Prostate gland (tissue), 2 donors: ENCODE measurements at regions of chr6 and their contacts with region 1.

Region 1: GRCh38 chr6:53651764-53652401 is 13.7 kb downstream of the KLHL31 start:
- DNase-seq: peak; percentile 83
- H3K4me3 ChIP-seq: peak overlapping the region; percentile 51 to 55
- H3K27ac ChIP-seq: peak overlapping the region; percentile 72 to 81
- H3K4me1 ChIP-seq: no peaks in the 10 kb centered on the region
- H3K27me3 ChIP-seq: no peaks in the 10 kb centered on the region
- CTCF ChIP-seq: peak in 3 of 4 experiments; percentile 35 to 80 (median 69)
- POLR2A ChIP-seq: peak; percentile 39

Region 2: DNA sequence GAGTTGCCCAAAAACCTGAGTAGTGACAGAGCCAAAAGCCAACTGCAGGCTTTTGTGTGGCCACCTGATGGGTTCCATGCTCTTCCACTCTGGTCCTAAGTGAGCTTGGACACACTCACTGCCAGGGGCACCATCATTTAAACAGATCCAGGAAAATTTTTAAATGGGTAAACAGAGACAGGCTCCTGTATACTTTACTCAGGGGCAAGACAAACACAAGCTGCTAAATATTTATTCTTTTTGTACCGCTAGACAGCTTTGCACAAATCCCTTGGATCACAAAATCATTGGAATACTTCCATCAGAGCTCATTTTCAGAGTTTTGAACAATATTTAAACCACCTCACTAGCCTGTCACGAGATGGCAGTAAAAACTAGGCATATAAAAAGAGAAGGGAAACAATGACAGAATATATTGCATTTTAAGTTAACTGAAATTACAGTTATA is 138.3 kb before region 1 on chr6:
- intact Hi-C with region 1: loop called (anchors 5 kb)
- DNase-seq: peak; percentile 20
- H3K4me3 ChIP-seq: no peak overlapping the region
- H3K27ac ChIP-seq: peak overlapping the region in 1 of 2 donors; percentile 1
- H3K4me1 ChIP-seq: peaks cover 7% of the 10 kb centered on the region
- H3K27me3 ChIP-seq: no peaks in the 10 kb centered on the region
- CTCF ChIP-seq: peak in 3 of 4 experiments; percentile 24 to 52 (median 28)
- POLR2A ChIP-seq: no peak

Region 3: DNA sequence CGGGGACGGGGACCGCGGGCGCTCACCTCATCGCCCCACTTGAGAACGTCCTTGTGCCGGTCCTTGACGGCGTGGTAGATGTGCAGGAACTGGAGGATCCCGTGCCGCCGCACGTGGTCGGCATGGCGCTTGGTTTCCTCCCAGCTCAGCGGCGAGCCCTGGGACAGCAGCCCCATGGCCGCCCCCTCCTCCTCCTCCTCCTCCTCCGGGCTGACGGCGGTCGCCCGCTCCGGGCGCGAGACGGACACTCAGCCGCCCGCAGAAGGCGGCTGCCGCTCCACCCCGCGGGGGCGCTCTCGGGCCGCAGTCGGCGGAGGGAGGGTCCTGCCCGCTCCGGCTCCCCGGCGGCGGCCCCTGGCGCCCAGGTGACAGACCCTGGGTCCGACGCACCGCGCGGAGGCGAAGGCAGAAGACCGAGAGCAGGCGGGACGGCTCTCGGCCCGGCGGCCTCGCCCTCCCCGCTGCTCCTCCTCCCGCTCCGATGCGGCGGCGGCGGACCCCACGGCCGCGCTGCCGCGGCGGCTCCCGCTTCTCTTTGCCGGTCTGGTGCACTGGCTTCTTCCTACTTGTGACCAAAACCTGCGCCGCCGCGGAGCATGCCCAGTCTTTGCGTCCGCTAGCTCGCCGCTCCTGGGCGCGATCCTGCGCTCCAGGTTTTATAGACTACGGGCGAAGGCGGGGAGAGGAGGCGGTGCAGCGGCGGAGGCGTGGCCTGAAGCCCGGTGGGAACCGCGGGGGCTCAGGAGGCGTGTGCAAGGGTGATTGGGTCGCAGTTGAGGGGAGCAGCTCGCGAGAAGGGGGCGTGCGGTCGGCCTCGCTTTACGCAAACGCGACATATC is 107.2 kb before region 1 on chr6 and contains the start of gene GCLC:
- intact Hi-C with region 1: loop called (anchors 1 kb)
- DNase-seq: peak; percentile 93
- H3K4me3 ChIP-seq: peak within 1 kb of the TSS; percentile 79 to 95
- H3K27ac ChIP-seq: peak within 1 kb of the TSS; percentile 92 to 97
- H3K4me1 ChIP-seq: peaks cover 4% of the 10 kb centered on the region
- H3K27me3 ChIP-seq: no peaks in the 10 kb centered on the region
- CTCF ChIP-seq: peak; percentile 68 to 89 (median 84)
- POLR2A ChIP-seq: peak; percentile 86
- total RNA-seq, gene GCLC: 77.1 to 81.2 TPM

Region 4: DNA sequence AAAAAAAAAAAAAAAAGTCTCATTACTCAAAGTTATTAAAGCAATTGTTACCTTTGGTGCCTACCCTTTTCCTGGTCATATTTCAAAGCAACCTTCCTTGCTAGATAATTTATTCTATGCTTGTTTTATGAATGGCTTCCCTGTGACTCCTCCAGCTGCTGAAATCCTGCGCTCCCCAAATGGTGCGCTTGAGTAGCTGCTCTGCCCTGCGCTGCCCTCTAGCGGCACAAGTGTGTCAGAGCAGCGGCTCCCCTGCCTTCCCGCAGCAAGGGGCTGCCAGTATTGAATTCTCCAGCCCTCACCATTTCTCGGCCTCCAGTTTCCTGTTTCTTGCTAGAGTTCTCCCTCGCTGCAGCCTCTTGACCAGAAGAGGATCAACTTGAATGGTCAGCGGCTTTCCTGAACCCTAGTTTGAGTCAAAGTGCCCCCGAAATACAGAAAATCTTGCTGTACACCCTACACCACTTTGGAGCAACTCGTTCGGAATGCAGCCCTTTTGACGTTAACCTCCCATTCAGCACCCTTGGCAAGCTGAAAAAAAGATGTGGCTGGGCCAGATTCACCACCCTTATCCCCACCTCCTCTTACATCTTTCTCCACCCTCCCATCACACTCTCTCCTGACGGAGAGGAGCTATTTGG is 74.0 kb after region 1 on chr6:
- intact Hi-C with region 1: loop called (anchors 10 kb)
- DNase-seq: peak; percentile 71
- H3K4me3 ChIP-seq: no peak overlapping the region
- H3K27ac ChIP-seq: no peak overlapping the region
- H3K4me1 ChIP-seq: no peaks in the 10 kb centered on the region
- H3K27me3 ChIP-seq: no peaks in the 10 kb centered on the region
- CTCF ChIP-seq: peak; percentile 86 to 90 (median 89)
- POLR2A ChIP-seq: no peak

Region 5: DNA sequence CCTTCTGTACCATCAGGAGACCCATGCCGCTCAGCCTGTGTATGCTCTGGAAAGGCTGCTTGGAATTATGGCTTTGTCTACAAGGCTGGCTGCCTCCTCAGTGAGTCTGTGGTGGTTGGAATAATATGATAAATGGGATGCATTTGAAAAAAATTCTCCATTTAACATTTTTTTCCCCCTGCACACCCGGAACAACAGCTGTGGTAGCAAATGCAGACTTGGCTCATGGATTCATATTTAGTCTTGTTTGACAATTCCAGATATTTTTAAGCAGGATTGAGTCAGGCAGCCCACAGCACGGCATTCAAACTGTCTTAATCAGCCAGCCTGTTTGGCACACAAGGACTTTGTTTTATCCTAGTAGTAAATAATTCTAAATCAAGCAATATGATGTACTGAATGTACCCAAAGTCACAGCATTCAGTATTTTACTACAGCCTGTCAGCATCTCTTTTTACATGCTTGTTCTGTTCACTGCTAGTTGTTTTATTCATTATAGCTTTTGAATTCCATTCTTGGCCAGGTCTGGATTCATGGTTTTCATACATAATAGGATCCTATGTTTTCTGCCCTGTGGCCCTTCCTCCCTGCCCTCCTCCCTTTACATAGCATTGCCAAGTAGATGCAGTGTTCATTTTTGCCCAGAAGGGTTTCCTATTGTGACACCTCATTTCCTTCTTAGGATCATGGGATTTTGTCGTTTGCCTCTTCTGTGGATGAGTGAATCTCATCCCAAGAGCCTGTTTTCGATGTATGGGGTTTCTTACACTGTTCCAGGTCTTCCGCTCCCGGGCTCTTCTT is 211.0 kb after region 1 on chr6:
- intact Hi-C with region 1: no loop called
- DNase-seq: no peak
- H3K4me3 ChIP-seq: no peak overlapping the region
- H3K27ac ChIP-seq: no peak overlapping the region
- H3K4me1 ChIP-seq: no peaks in the 10 kb centered on the region
- H3K27me3 ChIP-seq: no peaks in the 10 kb centered on the region
- CTCF ChIP-seq: no peak
- POLR2A ChIP-seq: no peak